Breast epithelium (tissue), 4 donors: ENCODE measurements at regions of chr3 and their contacts with region 1.

Region 1: GRCh38 chr3:157639756-157640426 is 136.7 kb upstream of the VEPH1 start:
- DNase-seq: no peak
- H3K4me3 ChIP-seq: no peak overlapping the region
- H3K27ac ChIP-seq: no peak overlapping the region
- H3K4me1 ChIP-seq: no peaks in the 10 kb centered on the region
- H3K27me3 ChIP-seq: no peaks in the 10 kb centered on the region
- CTCF ChIP-seq: no peak
- POLR2A ChIP-seq: no peak

Region 2: GRCh38 chr3:156816800-156817645 is 822.9 kb before region 1 on chr3:
- intact Hi-C with region 1: loop called (anchors 5 kb)
- DNase-seq: peak; percentile 59 to 79
- H3K4me3 ChIP-seq: peak overlapping the region; percentile 55 to 72 (median 70)
- H3K27ac ChIP-seq: peak overlapping the region; percentile 90 to 91
- H3K4me1 ChIP-seq: peaks cover 0 to 5% of the 10 kb centered on the region in 2 donors
- H3K27me3 ChIP-seq: no peaks in the 10 kb centered on the region
- CTCF ChIP-seq: peak in 1 of 3 donors; percentile 7
- POLR2A ChIP-seq: no peak

Region 3: DNA sequence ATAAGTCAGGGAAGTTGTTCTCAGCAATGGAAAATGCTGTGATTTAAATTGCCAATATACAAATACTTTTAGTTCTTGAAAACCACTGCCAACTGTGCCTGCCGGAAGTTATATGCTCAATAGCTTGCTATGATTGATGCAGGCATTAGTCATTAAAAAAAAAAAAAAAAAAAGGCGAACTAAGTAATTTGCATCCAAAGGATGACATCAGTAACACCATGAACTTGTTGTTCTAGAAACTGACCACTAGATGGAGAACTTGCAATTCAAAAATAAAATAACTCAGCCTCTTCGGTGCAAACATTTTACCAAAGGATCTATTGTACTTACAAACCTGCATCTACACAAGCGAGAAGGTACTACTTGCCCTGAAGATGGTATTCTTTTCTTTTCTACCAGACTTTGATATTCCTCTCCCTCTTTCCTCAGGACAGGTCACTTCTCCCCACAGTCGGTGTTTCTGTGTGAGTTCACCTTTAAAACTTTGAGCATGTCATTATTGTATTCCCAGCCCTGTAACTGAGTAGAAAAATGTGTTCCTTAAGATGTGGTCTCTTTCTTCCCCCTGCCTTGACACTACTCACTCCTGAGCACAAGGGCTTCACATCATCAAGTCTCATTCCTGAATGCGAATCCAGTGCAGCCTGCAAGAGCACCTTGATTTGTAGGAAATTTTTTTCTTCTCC is 21.7 kb before region 1 on chr3:
- intact Hi-C with region 1: no loop called
- DNase-seq: no peak
- H3K4me3 ChIP-seq: no peak overlapping the region
- H3K27ac ChIP-seq: no peak overlapping the region
- H3K4me1 ChIP-seq: no peaks in the 10 kb centered on the region
- H3K27me3 ChIP-seq: no peaks in the 10 kb centered on the region
- CTCF ChIP-seq: peak; percentile 62 to 72 (median 66)
- POLR2A ChIP-seq: no peak